ENCODE measurements at regions of chr2 and their contacts with region 1.

Region 1: DNA sequence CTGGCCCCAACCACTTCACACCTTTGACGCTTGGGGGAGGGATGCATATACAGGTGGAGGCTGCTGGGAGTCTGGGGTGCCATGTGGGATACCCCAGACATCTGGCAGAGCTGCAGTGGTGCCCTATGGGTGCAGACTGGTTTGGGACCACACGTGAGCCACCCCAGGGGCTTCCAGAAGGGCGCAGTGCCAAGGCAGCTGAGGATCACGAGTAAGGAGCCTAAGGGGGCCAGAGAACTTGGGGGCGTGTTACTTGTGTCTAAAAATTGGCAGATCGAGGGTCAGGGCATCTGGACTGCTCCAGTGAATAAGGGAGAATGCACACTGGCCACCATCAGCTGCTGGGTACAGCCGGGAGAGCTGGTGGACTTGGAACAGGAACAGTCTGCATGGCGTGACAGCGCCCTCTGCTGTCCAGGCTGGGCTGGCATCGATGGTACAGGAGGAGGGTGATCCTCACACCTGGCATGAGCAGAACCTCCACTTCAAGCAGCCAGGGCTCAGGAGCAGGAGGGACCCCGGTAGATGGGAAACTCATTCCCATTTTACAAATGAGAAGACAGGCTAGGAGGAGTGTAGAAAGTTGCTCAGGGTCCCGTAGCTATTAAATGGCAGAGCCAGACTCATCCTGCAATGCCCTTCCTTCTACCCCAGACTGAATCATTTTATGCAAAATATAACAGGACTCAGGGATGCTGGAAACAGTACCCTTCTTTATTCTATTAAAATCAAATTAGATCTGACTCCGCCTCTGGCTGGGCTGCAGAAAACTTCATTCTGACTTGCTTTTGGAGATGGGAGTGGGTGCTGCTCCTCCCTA is 60.4 kb downstream of the ATOH8 start:
- DNase-seq: peak; percentile 70
- H3K4me3 ChIP-seq: no peak overlapping the region
- H3K27ac ChIP-seq: no peak overlapping the region
- H3K27me3 ChIP-seq: no peaks in the 10 kb centered on the region
- CTCF ChIP-seq: peak; percentile 99

Region 2: DNA sequence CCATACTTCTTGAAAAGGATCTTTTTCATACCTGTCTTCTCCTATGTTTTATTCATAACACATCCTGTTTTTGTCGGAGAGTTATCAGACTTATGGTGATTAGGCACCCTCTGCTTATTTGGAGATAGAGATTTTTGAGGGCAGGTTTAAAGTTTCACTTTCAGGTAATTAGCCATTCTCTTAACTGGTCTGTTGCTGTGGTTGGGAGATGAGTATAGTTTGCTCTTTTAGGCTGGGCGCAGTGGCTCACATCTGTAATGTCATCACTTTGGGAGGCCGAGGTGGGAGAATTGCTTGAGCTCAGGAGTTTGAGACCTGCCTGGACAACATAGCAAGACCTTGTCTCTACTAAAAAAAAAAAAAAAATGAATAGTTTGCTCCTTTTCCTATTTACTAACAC is 171.5 kb before region 1 on chr2:
- CTCF ChIA-PET with region 1: interaction called, 30 read pairs
- POLR2A ChIA-PET with region 1: no interaction called
- DNase-seq: no peak
- H3K4me3 ChIP-seq: no peak overlapping the region
- H3K27ac ChIP-seq: no peak overlapping the region
- H3K27me3 ChIP-seq: no peaks in the 10 kb centered on the region
- CTCF ChIP-seq: no peak

Region 3: DNA sequence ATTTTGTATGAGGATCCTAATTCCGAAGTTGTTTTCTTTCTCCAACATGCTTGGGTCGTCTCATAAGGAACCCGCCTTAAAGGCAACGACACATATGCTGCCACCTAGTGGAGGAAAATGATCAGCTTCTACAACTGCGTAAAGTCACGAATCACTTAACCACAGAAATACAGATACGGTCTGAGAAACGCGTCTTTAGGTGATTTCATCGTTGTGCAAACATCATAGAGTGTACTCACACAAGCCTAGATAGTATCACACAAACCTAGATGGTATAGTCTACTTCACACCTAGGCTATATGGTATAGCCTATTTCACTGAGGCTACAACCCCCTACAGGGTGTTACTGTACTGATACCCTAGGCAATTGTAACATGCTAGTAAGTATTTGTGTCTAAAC is 106.9 kb before region 1 on chr2:
- CTCF ChIA-PET with region 1: interaction called, 15 read pairs
- POLR2A ChIA-PET with region 1: no interaction called
- DNase-seq: peak; percentile 87
- H3K4me3 ChIP-seq: no peak overlapping the region
- H3K27ac ChIP-seq: no peak overlapping the region
- H3K27me3 ChIP-seq: no peaks in the 10 kb centered on the region
- CTCF ChIP-seq: peak; percentile 89

Region 4: DNA sequence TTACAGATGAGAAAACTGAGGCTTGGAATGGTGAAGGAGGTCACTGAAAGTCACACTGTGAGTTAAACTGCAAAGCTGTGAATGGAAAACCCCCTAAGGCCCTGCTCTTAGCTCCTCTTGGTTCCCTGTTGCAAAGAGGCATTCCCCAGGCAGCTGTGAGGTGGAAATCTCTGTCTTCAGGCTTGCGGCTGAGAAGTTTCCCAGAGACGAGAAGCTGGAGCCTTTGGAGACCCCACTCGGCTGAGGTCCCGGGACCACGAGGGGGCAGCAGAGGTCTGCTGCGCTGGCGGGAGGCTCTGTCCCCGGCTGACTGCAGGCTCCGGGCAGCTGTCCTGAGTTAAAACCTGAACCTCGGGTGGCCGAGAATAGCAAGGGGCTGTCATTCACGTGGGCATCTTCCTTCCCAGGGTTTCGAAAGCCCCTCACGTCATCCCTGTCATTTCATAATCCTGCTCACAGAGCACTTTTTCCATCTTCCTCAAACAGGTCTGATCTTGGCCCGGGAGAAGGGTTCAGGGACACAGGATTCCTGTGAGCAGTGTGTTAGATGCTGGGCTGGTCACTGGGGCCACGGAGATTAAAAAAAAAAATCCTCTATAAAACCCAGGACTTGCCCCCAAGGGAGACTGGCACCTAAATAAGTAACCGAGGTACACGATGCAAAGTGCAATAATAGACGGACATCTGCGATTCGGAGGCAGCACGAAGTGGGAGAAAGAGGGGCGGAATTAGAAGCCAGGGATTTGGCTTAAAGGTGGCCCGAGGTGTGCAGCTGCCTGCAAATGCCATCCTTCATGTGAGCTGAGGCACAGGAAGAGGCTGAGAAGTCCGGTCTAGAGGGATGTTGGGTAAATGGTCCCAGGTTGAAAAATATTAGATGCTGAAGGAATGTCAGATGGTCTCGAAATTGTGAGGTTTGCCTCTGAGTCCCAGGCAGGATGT is 85.0 kb before region 1 on chr2:
- CTCF ChIA-PET with region 1: interaction called, 203 read pairs
- POLR2A ChIA-PET with region 1: interaction called, 8 read pairs
- DNase-seq: no peak
- H3K4me3 ChIP-seq: no peak overlapping the region
- H3K27ac ChIP-seq: no peak overlapping the region
- H3K27me3 ChIP-seq: peaks cover 10% of the 10 kb centered on the region
- CTCF ChIP-seq: peak; percentile 100

Region 5: DNA sequence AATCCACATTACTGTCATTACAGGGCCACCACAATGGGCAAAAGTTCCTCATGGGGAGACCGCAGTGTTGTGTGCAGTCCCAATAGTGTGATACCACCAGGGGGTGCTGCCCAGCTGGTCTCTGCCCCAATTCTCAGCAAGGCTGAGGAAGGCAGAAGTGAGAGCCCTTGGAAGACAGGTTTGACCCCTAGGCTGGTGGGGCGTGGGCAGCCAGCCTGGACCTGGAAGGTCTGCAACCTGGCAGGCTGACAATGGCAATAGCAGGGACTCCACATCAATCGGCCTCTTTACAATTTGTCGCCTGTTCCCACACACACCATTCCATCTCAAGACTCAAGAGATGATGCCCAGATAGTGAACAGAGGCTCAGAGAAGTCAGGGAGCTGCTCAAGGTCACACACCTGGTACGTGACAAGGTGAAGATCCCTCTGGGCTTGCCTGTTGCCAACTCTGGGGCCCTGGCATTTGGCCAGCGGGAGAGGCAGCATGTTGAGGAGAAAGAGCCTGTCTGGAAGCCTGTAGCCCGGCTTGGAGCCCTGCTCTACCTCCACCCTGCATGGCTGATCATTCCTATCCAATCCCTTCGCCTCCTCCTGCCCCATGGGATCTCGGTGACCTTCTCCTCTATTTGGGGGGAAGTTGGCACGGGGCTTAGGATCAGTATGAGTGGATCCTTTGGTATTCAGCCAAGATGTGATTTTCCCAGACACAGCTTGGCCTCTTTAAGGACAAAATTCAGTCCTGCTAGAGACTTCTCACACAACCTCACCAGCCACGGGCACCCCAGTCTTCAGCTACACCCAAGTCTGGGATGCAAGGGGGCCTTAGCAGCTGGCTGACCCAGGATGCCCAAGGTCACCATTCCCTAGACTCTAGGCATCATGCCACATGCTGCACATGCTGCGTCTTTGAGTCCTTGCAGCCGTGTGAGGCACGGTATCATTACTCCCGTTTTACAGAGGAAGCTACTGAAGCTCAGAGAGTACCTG is 63.3 kb before region 1 on chr2:
- CTCF ChIA-PET with region 1: interaction called, 72 read pairs
- POLR2A ChIA-PET with region 1: interaction called, 5 read pairs
- DNase-seq: no peak
- H3K4me3 ChIP-seq: no peak overlapping the region
- H3K27ac ChIP-seq: no peak overlapping the region
- H3K27me3 ChIP-seq: peaks cover 5% of the 10 kb centered on the region
- CTCF ChIP-seq: peak; percentile 86

Region 6: DNA sequence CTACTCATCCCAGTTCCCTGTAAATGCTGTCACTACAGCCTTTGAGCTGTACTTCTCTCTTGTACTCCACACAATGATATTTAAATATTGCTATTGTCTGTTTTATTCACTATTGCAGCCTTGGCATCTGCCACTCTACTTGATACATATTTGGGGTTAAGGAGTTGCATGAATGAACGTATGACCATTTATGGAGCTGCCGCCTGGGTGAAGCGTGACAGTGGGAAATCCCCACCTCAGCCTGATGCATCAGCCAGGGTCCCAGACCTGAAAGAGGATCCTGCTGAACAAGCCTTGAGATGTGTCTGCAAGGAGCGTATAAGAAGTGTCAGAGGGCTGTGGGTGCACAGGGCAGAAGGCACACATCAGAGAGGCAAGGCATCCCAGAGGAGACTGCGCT is 424.2 kb after region 1 on chr2:
- CTCF ChIA-PET with region 1: no interaction called
- POLR2A ChIA-PET with region 1: no interaction called
- DNase-seq: no peak
- H3K4me3 ChIP-seq: no peak overlapping the region
- H3K27ac ChIP-seq: no peak overlapping the region
- H3K27me3 ChIP-seq: peaks cover 21% of the 10 kb centered on the region
- CTCF ChIP-seq: no peak

Measured in AG04450 (cell line).